ENCODE measurements at regions of chr20 and their contacts with region 1.

Region 1: GRCh38 chr20:53175135-53175780 is 203.1 kb downstream of the TSHZ2 start:
- DNase-seq: no peak
- ATAC-seq: no peak
- H3K4me3 Mint-ChIP-seq: no peak overlapping the region
- H3K27ac Mint-ChIP-seq: no peak overlapping the region
- H3K4me1 Mint-ChIP-seq: peaks cover 14% of the 10 kb centered on the region
- H3K27me3 Mint-ChIP-seq: peaks cover 4% of the 10 kb centered on the region

Region 2: DNA sequence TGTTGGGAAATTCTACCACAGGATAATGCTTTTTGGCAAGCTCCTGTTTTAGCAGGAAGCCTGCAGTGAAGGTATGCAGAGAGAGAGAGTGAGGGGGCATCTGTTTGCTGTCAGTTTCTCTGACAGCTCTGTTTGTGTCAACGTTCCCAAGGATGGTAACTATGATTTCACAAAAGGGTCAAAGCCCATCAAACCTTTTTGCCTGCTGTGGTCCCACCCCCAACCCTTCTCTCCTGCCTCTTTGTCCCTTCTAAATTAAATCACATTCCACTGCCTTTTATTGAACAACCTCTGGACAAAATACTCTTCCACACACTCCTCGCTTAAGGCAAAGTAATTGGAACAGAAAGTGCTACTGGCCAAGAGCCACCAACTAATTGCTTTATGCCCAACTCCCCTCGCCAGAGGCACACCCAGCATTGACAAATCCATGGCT is 74.8 kb before region 1 on chr20:
- CTCF ChIA-PET with region 1: no interaction called
- POLR2A ChIA-PET with region 1: no interaction called
- intact Hi-C with region 1: no loop called
- DNase-seq: no peak
- ATAC-seq: no peak
- H3K4me3 Mint-ChIP-seq: no peak overlapping the region
- H3K27ac Mint-ChIP-seq: no peak overlapping the region
- H3K4me1 Mint-ChIP-seq: no peaks in the 10 kb centered on the region
- H3K27me3 Mint-ChIP-seq: no peaks in the 10 kb centered on the region

Region 3: GRCh38 chr20:53202777-53203176 is 27.5 kb after region 1 on chr20:
- CTCF ChIA-PET with region 1: no interaction called
- POLR2A ChIA-PET with region 1: no interaction called
- intact Hi-C with region 1: no loop called
- DNase-seq: no peak
- ATAC-seq: peak; percentile 97
- H3K4me3 Mint-ChIP-seq: no peak overlapping the region
- H3K27ac Mint-ChIP-seq: no peak overlapping the region
- H3K4me1 Mint-ChIP-seq: peaks cover 21% of the 10 kb centered on the region
- H3K27me3 Mint-ChIP-seq: peaks cover 2% of the 10 kb centered on the region

Region 4: DNA sequence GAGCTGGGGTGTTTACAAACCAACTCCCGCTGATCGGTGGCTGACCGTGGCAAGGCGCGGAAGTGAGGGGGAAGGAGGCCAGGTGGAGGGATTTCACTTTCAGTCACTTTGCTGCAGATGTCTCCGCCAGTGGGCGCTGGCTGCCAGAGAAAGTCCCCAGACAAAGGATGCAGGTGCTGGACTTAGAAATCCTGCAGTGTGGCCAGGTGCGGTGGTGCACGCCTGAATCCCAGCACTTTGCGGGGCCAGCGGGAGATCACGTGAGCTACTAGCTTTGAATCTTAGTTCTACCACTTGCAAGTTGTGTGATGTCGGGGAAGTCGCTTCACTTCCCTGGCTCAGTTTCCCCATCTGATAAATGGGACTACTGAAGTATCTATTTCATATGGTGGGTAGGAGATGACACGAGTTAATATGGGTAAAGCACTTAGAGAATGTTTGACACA is 238.0 kb after region 1 on chr20:
- CTCF ChIA-PET with region 1: no interaction called
- POLR2A ChIA-PET with region 1: interaction called, 11 read pairs
- intact Hi-C with region 1: no loop called
- DNase-seq: peak; percentile 75
- ATAC-seq: peak; percentile 71
- H3K4me3 Mint-ChIP-seq: no peak overlapping the region
- H3K27ac Mint-ChIP-seq: peak overlapping the region; percentile 38
- H3K4me1 Mint-ChIP-seq: peaks cover 6% of the 10 kb centered on the region
- H3K27me3 Mint-ChIP-seq: no peaks in the 10 kb centered on the region

Measured in activated CD4-positive, alpha-beta T cell treated with anti-CD3 and anti-CD28 coated beads for 36 hours (primary cell).